ENCODE measurements at regions of chr9 and their contacts with region 1.

Region 1: GRCh38 chr9:133089271-133089671 is 27.5 kb downstream of the CEL start:
- DNase-seq: no peak
- ATAC-seq: no peak
- H3K4me3 ChIP-seq: no peak overlapping the region
- H3K27ac ChIP-seq: no peak overlapping the region
- H3K4me1 ChIP-seq: no peaks in the 10 kb centered on the region
- H3K27me3 ChIP-seq: no peaks in the 10 kb centered on the region
- CTCF ChIP-seq: no peak

Region 2: DNA sequence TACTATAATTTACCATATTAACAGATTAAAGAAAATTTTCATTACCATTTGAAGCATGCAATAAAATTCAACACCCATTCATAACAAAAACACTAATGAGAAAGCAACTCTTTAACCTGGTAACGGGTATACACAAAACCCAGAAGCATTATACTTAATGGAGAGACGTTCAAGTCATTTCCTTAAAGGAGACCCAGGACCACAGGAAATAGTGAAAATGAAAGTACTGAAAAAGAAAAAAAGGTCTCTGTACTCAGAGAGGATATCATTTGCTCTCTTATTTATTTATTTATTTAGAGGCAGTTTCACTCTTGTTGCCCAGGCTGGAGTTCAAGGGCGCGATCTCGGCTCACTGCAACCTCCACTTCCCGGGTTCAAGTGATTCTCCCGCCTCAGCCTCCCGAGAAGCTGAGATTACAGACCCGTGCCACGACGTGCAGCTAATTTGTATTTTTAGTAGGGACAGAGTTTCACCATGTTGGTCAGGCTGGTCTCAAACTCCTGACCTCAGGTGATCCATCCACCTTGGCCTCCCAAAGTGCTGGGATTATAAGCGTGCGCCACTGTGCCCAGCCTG is 796.0 kb before region 1 on chr9:
- CTCF ChIA-PET with region 1: no interaction called
- POLR2A ChIA-PET with region 1: no interaction called
- in situ Hi-C with region 1: no loop called
- intact Hi-C with region 1: no loop called
- DNase-seq: no peak
- ATAC-seq: no peak
- H3K4me3 ChIP-seq: no peak overlapping the region
- H3K27ac ChIP-seq: no peak overlapping the region
- H3K4me1 ChIP-seq: no peaks in the 10 kb centered on the region
- H3K27me3 ChIP-seq: no peaks in the 10 kb centered on the region
- CTCF ChIP-seq: no peak

Region 3: GRCh38 chr9:133071484-133072150 is 17.7 kb before region 1 on chr9:
- CTCF ChIA-PET with region 1: no interaction called
- POLR2A ChIA-PET with region 1: interaction called, 3 read pairs
- in situ Hi-C with region 1: no loop called
- intact Hi-C with region 1: loop called (anchors 2 kb)
- DNase-seq: no peak
- ATAC-seq: peak; percentile 43; the same call in 1 of the 2 replicates
- H3K4me3 ChIP-seq: no peak overlapping the region
- H3K27ac ChIP-seq: no peak overlapping the region
- H3K4me1 ChIP-seq: no peaks in the 10 kb centered on the region
- H3K27me3 ChIP-seq: 0 out of 2 replicates have a peak, but pooled peaks cover 2% of the 10 kb centered on the region
- CTCF ChIP-seq: no peak

Measured in Panc1 (cell line).